Activated naive CD4-positive, alpha-beta T cell treated with anti-CD3 and anti-CD28 coated beads for 36 hours (primary cell): ENCODE measurements at regions of chr10 and their contacts with region 1.

Region 1: DNA sequence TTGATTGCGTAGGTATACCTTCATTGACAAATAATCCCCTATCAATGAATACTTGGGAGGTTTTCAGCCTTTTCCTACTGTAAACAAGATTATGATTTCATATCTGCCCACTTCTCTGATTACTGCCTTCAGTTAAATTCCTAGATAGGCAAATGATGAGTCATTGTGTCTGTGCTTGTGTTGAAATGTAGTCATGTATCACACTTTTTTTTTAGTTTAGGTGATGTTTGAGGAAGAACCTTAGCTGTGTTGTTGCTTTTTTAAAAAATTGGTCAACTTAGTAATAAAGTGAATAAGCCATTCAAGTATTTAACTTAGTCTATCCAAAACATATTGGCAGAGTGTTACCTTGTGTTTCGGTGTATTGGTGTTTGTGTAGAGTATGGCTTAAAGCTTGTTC is 60.0 kb downstream of the WAC start:
- DNase-seq: no peak
- H3K4me3 Mint-ChIP-seq: no peak overlapping the region
- H3K27ac Mint-ChIP-seq: peak overlapping the region; percentile 10
- H3K4me1 Mint-ChIP-seq: peaks cover 51% of the 10 kb centered on the region
- H3K27me3 Mint-ChIP-seq: no peaks in the 10 kb centered on the region

Region 2: GRCh38 chr10:28577506-28577905 is 15.4 kb before region 1 on chr10:
- CTCF ChIA-PET with region 1: no interaction called
- intact Hi-C with region 1: loop called (anchors 2 kb)
- DNase-seq: no peak
- H3K4me3 Mint-ChIP-seq: no peak overlapping the region
- H3K27ac Mint-ChIP-seq: no peak overlapping the region
- H3K4me1 Mint-ChIP-seq: peaks cover 78% of the 10 kb centered on the region
- H3K27me3 Mint-ChIP-seq: no peaks in the 10 kb centered on the region

Region 3: GRCh38 chr10:28620251-28620650 is 27.3 kb after region 1 on chr10:
- CTCF ChIA-PET with region 1: no interaction called
- intact Hi-C with region 1: no loop called
- DNase-seq: no peak
- H3K4me3 Mint-ChIP-seq: no peak overlapping the region
- H3K27ac Mint-ChIP-seq: no peak overlapping the region
- H3K4me1 Mint-ChIP-seq: peaks cover 4% of the 10 kb centered on the region
- H3K27me3 Mint-ChIP-seq: no peaks in the 10 kb centered on the region